Upper lobe of right lung (tissue), 1 donor: ENCODE measurements at regions of chr4 and their contacts with region 1.

Region 1: DNA sequence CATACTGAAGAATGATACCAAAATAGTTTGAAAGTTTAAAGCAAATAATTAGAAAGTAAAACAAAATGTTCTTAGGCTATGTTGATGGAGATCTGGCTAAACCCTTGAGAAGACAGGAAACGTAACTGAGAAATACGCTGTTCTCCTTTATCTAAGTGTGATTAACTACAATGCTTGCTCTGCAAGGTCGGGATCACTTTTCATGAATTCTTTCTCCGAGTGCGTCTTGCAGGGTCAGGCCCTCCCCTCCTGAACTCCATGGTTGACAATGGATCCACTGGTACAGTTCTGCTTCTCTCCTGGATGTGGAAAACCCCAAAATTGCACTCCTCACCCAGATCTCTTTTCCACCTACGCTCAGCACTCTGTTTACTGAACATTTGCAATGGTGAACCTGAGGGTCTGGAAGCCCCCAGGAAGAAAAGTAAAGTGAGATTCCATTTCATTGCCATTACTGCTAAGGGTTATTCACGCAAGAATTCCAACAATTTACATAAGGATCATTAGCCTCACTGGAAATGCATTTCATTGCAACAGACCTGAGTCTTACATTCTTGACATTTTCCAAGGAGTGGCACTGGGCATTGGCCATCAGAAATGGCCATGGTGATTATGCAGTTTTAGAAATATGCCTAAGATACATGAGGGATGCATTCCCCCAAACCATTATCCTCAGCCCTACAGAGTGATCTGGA is 24.6 kb upstream of the WWC2 start:
- DNase-seq: no peak
- ATAC-seq: peak; percentile 66
- H3K4me3 ChIP-seq: no peak overlapping the region
- H3K27ac ChIP-seq: peak overlapping the region; percentile 9
- H3K4me1 ChIP-seq: no peaks in the 10 kb centered on the region
- H3K27me3 ChIP-seq: no peaks in the 10 kb centered on the region
- CTCF ChIP-seq: no peak

Region 2: GRCh38 chr4:183106839-183107238 is 32.4 kb after region 1 on chr4:
- intact Hi-C with region 1: no loop called
- DNase-seq: no peak
- ATAC-seq: no peak
- H3K4me3 ChIP-seq: no peak overlapping the region
- H3K27ac ChIP-seq: no peak overlapping the region
- H3K4me1 ChIP-seq: peaks cover 6% of the 10 kb centered on the region
- H3K27me3 ChIP-seq: no peaks in the 10 kb centered on the region
- CTCF ChIP-seq: no peak

Region 3: DNA sequence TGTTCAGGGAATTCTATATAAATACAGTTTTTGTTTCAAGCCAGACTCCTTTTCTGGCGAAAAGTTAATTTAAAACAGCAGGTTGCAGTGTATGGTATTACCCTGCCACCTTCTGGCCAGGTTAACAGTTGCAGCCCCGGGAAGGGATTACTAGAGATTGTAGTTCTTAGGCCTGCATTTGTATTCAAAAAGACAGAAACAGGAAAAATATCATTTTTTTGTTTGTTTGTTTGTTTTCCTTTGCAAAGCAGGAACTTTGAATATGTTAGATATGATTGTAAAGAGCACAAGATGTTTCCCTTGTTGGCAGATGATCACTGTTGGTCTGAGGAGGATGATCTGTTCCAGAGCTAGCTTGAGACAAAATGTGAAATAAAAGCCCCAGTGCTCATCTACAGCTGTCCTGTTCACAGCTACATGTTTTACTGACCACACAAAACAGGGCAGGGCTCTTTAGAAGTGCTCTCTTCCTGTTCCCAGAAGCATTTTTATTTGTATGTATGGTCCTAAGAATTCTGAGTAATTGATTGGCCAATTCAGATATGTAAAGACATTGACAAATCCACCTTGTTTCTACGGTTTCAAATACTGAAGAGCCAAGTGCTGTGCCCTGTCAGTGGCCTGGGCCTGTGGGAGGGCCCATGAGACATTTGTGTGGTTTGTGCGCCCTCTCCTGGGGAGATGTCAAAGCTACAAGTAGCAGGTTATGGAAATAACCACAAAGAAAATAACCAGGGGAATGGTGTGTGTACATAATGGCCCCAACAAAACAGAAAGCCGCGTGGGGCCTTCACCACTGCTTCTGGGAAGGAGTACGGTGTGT is 187.7 kb after region 1 on chr4:
- intact Hi-C with region 1: loop called (anchors 5 kb)
- DNase-seq: peak; percentile 84
- ATAC-seq: peak; percentile 95
- H3K4me3 ChIP-seq: no peak overlapping the region
- H3K27ac ChIP-seq: peak overlapping the region; percentile 53
- H3K4me1 ChIP-seq: peaks cover 19% of the 10 kb centered on the region
- H3K27me3 ChIP-seq: no peaks in the 10 kb centered on the region
- CTCF ChIP-seq: peak; percentile 74